Naive thymus-derived CD4-positive, alpha-beta T cell (primary cell): ENCODE measurements at regions of chr10 and their contacts with region 1.

Region 1: DNA sequence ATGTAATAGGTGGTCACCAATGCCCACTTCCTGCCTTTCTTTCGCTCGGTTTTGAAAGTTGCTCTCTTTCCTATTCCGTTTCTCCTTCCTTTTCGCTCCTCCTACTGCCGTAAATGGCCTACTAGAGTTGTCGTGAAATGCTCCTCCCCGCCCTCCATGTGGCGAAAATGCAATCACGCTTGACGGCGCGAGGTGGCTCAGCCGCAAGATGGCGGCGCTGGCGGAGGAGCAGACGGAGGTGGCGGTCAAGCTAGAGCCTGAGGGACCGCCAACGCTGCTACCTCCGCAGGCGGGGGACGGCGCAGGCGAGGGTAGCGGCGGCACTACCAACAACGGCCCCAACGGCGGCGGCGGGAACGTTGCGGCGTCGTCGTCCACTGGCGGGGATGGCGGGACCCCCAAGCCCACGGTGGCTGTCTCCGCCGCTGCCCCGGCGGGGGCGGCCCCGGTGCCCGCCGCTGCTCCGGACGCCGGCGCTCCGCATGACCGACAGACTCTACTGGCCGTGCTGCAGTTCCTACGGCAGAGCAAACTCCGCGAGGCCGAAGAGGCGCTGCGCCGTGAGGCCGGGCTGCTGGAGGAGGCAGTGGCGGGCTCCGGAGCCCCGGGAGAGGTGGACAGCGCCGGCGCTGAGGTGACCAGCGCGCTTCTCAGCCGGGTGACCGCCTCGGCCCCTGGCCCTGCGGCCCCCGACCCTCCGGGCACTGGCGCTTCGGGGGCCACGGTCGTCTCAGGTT is at the start of gene TAF5:
- DNase-seq: peak; percentile 70 to 94 (median 90)
- ATAC-seq: peak; percentile 88
- H3K4me3 ChIP-seq: peak within 1 kb of the TSS; percentile 58
- H3K4me3 Mint-ChIP-seq: peak within 1 kb of the TSS; percentile 92 to 99 (median 96)
- H3K27ac ChIP-seq: peak within 1 kb of the TSS; percentile 77
- H3K27ac Mint-ChIP-seq: peak within 1 kb of the TSS; percentile 84 to 98 (median 94)
- H3K4me1 ChIP-seq: peaks cover 4 to 11% of the 10 kb centered on the region in 2 donors
- H3K4me1 Mint-ChIP-seq: peaks cover 0 to 35% (median 23%) of the 10 kb centered on the region in 7 donors
- H3K27me3 ChIP-seq: no peaks in the 10 kb centered on the region
- H3K27me3 Mint-ChIP-seq: no peaks in the 10 kb centered on the region
- total RNA-seq, gene TAF5: 4.7 to 8.9 (median 7.1) TPM

Region 2: DNA sequence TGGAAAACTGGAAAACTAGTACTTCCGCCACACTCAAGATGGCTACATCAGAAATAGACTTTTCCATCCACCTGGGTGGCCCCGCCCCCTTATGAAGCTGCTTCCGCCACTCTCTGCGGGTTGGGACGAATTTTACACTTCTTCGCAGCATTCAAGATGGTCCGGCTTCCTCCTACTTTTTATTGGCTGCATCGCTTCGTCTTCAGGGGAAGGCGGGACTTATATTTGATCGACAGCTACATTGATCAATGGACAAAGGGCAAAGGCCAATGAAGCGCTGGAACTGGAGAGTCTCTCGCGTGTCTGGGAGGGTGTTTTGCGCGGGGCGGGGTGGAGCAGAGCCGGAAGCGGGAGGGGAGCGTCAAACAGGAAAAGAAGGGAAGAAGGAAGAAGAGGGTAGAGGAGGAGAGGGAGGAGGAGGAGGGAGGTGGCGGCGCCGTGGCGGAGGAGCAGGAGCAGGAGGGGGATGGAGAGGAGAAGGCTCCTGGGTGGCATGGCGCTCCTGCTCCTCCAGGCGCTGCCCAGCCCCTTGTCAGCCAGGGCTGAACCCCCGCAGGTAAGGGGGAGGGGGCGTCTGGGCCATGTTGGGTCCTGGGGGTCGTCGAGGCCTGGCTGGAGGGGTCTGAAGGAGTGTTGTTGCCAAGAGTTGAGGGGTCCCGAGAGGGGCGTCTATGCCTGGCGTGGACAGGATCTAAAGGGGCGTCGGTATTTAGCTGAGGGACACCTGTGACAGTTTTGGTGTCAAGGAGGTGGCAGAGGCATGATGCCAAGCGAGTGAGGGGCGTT is 624.2 kb before region 1 on chr10 and contains the start of gene WBP1L:
- CTCF ChIA-PET with region 1: no interaction called
- POLR2A ChIA-PET with region 1: no interaction called
- intact Hi-C with region 1: loop called in 1 of 2 experiments (anchors 1 kb)
- DNase-seq: peak; percentile 77 to 98 (median 96)
- ATAC-seq: peak; percentile 98
- H3K4me3 ChIP-seq: peak within 1 kb of the TSS; percentile 85
- H3K4me3 Mint-ChIP-seq: peak within 1 kb of the TSS; percentile 80 to 97 (median 93)
- H3K27ac ChIP-seq: peak within 1 kb of the TSS; percentile 77
- H3K27ac Mint-ChIP-seq: peak within 1 kb of the TSS; percentile 57 to 96 (median 90)
- H3K4me1 ChIP-seq: peaks cover 17 to 25% of the 10 kb centered on the region in 2 donors
- H3K4me1 Mint-ChIP-seq: peaks cover 33 to 59% (median 48%) of the 10 kb centered on the region in 7 donors
- H3K27me3 ChIP-seq: no peaks in the 10 kb centered on the region
- H3K27me3 Mint-ChIP-seq: no peaks in the 10 kb centered on the region
- total RNA-seq, gene WBP1L: 20.5 to 37.9 (median 34.1) TPM

Region 3: DNA sequence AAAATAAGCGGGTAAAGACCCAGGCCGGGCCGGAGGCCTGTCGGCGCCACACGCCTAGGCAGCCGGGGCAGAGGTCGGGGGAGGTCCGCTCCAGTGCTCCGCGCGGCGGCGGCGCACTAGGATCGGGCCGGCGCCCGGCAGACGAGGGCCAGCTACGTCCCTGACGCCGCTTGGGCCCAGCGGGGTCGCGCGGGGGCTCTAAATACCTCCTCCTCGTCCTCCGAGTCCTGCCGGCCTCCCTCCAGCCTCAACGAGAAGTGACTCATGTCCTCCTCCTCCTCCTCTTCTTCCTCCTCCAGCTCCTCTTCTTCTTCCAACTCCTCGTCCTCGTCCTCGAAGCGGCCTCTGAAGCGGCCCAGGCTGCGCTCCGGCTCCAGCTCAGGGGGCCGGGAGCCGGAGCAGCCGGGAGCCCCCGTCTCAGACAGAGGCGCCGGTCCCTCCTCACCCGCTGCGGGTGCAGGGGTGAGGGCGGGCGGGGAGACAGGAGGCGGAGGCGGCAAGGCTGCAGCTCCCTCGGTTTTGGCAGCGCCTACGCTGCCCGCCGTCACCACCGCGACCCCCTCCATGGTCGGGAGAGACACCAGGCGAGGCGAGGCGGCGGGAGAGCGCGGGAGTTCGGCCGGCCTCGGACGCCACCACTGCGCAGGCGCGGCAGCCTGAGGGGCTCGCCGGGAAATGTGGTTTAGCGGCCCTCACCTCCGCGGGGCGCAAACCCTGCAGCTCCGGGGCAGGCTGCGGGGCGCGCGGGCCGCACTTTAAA is 17.3 kb before region 1 on chr10 and contains the start of gene PCGF6:
- CTCF ChIA-PET with region 1: interaction called, 5 read pairs
- POLR2A ChIA-PET with region 1: interaction called, 24 read pairs
- intact Hi-C with region 1: loop called (anchors 1 kb)
- DNase-seq: peak; percentile 42 to 85 (median 70)
- ATAC-seq: peak; percentile 88
- H3K4me3 ChIP-seq: peak within 1 kb of the TSS; percentile 79
- H3K4me3 Mint-ChIP-seq: peak within 1 kb of the TSS; percentile 83 to 95 (median 91)
- H3K27ac ChIP-seq: peak within 1 kb of the TSS; percentile 80
- H3K27ac Mint-ChIP-seq: peak within 1 kb of the TSS; percentile 69 to 94 (median 86)
- H3K4me1 ChIP-seq: peaks cover 6 to 11% of the 10 kb centered on the region in 2 donors
- H3K4me1 Mint-ChIP-seq: peaks cover 0 to 14% (median 9%) of the 10 kb centered on the region in 7 donors
- H3K27me3 ChIP-seq: no peaks in the 10 kb centered on the region
- H3K27me3 Mint-ChIP-seq: no peaks in the 10 kb centered on the region
- total RNA-seq, gene PCGF6: 4.3 to 12.0 (median 6.6) TPM

Region 4: DNA sequence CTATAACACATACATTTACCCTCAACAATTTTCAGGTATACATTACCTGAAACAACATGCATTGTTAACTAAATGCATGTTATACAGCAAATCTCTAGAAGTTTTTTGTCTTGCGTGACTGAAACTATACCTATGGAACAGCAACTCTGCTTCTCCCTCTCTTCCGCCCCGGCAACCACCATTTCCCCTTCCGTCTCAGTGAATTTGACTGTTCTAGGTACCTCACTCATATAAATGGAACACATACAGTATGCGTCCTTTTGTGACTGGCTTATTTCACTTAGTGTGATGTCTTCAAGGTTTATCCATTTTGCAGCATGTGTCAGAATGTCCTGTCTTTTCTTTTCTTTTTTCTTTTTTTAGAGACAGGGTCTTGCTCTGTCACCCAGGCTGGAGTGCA is 61.7 kb after region 1 on chr10:
- CTCF ChIA-PET with region 1: no interaction called
- POLR2A ChIA-PET with region 1: no interaction called
- intact Hi-C with region 1: loop called in 1 of 2 experiments (anchors 2 kb)
- DNase-seq: peak in 3 of 9 donors; percentile 18 to 39 (median 19)
- ATAC-seq: peak; percentile 54
- H3K4me3 ChIP-seq: no peak overlapping the region
- H3K4me3 Mint-ChIP-seq: peak overlapping the region; percentile 31 to 81 (median 73)
- H3K27ac ChIP-seq: peak overlapping the region; percentile 19
- H3K27ac Mint-ChIP-seq: peak overlapping the region in 7 of 9 donors; percentile 18 to 79 (median 33)
- H3K4me1 ChIP-seq: peaks cover 0 to 18% of the 10 kb centered on the region in 2 donors
- H3K4me1 Mint-ChIP-seq: peaks cover 16 to 58% (median 40%) of the 10 kb centered on the region in 7 donors
- H3K27me3 ChIP-seq: no peaks in the 10 kb centered on the region
- H3K27me3 Mint-ChIP-seq: no peaks in the 10 kb centered on the region

Region 5: GRCh38 chr10:103918053-103918846 is 550.3 kb after region 1 on chr10 and contains the start of gene STN1:
- CTCF ChIA-PET with region 1: no interaction called
- POLR2A ChIA-PET with region 1: no interaction called
- intact Hi-C with region 1: loop called (anchors 5 to 10 kb)
- DNase-seq: peak; percentile 81 to 95 (median 94)
- ATAC-seq: peak; percentile 97
- H3K4me3 ChIP-seq: peak within 1 kb of the TSS; percentile 89
- H3K4me3 Mint-ChIP-seq: peak within 1 kb of the TSS; percentile 88 to 99 (median 97)
- H3K27ac ChIP-seq: peak within 1 kb of the TSS; percentile 79
- H3K27ac Mint-ChIP-seq: peak within 1 kb of the TSS; percentile 95 to 99 (median 97)
- H3K4me1 ChIP-seq: peaks cover 28 to 31% of the 10 kb centered on the region in 2 donors
- H3K4me1 Mint-ChIP-seq: peaks cover 15 to 44% (median 38%) of the 10 kb centered on the region in 7 donors
- H3K27me3 ChIP-seq: no peaks in the 10 kb centered on the region
- H3K27me3 Mint-ChIP-seq: no peaks in the 10 kb centered on the region
- total RNA-seq, gene STN1: 28.8 to 42.6 (median 34.8) TPM